GM12878 (cell line): ENCODE measurements at regions of chr5 and their contacts with region 1.

Region 1: GRCh38 chr5:18305297-18305924 is 671.2 kb downstream of the TAF11L14 start:
- DNase-seq: no peak
- ATAC-seq: peak; percentile 76
- H3K4me3 ChIP-seq: no peak overlapping the region
- H3K27ac ChIP-seq: no peak overlapping the region
- H3K4me1 ChIP-seq: no peaks in the 10 kb centered on the region
- H3K27me3 ChIP-seq: no peaks in the 10 kb centered on the region
- CTCF ChIP-seq: peak; percentile 66 to 91 (median 79); a peak in 5 of 6 replicates
- EP300 ChIP-seq: no peak
- POLR2A ChIP-seq: no peak
- RAD21 ChIP-seq: peak; percentile 95

Region 2: GRCh38 chr5:16791036-16791705 is 1514.2 kb before region 1 on chr5:
- CTCF ChIA-PET with region 1: interaction called, 4 read pairs
- POLR2A ChIA-PET with region 1: no interaction called
- RAD21 ChIA-PET with region 1: no interaction called
- SMC1A ChIA-PET with region 1: no interaction called
- in situ Hi-C with region 1: loop called (anchors 25 kb)
- intact Hi-C with region 1: no loop called
- DNase-seq: peak; percentile 24
- ATAC-seq: peak; percentile 76
- H3K4me3 ChIP-seq: no peak overlapping the region
- H3K27ac ChIP-seq: no peak overlapping the region
- H3K4me1 ChIP-seq: no peaks in the 10 kb centered on the region; the same call in 1 of the 2 replicates
- H3K27me3 ChIP-seq: no peaks in the 10 kb centered on the region
- CTCF ChIP-seq: peak; percentile 42 to 66 (median 52); a peak in 5 of 6 replicates
- EP300 ChIP-seq: no peak
- POLR2A ChIP-seq: no peak
- RAD21 ChIP-seq: peak; percentile 73

Region 3: DNA sequence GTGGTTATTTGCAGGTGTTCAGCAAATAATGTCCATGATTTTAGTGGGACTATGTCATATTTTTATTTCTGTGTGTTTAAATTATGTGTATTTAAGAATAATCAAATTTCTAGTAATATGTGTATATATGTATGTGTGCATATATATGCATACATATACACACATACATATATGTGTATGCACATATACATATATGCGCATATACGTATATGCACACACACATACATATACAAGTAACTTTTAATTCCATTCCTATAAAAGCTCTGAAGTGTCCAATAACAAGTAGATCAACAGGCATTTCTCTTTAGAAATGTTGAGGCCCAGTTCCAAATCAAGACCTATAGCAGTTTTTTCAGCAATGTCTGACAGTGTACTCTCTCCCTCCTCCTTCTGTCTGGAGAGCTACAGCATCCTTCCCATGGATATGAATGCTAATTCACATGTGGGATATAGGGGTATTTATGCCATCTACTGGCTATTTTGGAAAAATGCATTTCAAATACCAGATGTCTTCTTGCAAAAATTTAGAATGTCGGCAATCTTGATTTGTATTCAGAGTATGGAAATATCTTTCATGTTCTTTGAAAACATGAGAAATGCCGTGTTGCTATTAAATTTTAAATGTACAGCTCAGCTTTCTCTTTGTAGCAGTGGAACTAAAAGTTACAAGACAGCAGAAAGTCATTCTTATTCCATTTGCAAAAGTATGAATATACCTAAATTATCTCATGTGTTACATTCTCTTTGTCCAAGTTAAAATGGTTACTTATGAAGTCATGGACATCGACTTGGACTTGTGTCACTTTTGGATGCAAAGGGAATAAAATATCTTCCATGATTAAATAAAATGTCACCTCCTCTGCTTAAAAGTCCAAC is 23.5 kb before region 1 on chr5:
- CTCF ChIA-PET with region 1: interaction called, 12 read pairs
- POLR2A ChIA-PET with region 1: no interaction called
- RAD21 ChIA-PET with region 1: no interaction called
- SMC1A ChIA-PET with region 1: interaction called, 5 read pairs
- in situ Hi-C with region 1: no loop called
- intact Hi-C with region 1: no loop called
- DNase-seq: no peak
- ATAC-seq: peak; percentile 33; the same call in 1 of the 3 replicates
- H3K4me3 ChIP-seq: no peak overlapping the region
- H3K27ac ChIP-seq: no peak overlapping the region
- H3K4me1 ChIP-seq: no peaks in the 10 kb centered on the region
- H3K27me3 ChIP-seq: no peaks in the 10 kb centered on the region
- CTCF ChIP-seq: peak; percentile 10 to 47 (median 34); a peak in 4 of 6 replicates
- EP300 ChIP-seq: no peak
- POLR2A ChIP-seq: no peak
- RAD21 ChIP-seq: peak; percentile 66

Region 4: DNA sequence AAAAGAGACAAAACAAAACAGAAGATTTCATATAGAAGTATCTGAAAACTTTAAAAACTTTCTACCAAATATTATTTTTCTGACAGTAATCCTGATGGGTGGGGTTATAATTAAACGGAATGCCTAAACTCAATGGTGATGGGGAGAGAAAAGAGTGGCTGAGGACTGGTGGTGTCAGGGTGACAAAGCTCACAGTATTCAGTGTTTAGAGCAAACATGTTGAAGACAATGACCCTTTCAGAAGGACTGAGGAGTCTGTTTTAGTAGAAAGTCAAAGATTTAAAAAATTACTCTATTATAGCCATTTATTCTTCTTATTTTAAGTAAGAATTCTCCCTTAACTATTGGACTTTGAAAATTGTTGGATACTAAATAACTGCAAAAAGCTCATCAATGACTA is 472.8 kb after region 1 on chr5:
- CTCF ChIA-PET with region 1: no interaction called
- POLR2A ChIA-PET with region 1: no interaction called
- RAD21 ChIA-PET with region 1: no interaction called
- SMC1A ChIA-PET with region 1: no interaction called
- in situ Hi-C with region 1: no loop called
- intact Hi-C with region 1: no loop called
- DNase-seq: no peak
- ATAC-seq: no peak
- H3K4me3 ChIP-seq: no peak overlapping the region
- H3K27ac ChIP-seq: no peak overlapping the region
- H3K4me1 ChIP-seq: no peaks in the 10 kb centered on the region
- H3K27me3 ChIP-seq: no peaks in the 10 kb centered on the region
- CTCF ChIP-seq: no peak
- EP300 ChIP-seq: no peak
- POLR2A ChIP-seq: no peak
- RAD21 ChIP-seq: no peak